ENCODE measurements at regions of chr2 and their contacts with region 1.

Region 1: DNA sequence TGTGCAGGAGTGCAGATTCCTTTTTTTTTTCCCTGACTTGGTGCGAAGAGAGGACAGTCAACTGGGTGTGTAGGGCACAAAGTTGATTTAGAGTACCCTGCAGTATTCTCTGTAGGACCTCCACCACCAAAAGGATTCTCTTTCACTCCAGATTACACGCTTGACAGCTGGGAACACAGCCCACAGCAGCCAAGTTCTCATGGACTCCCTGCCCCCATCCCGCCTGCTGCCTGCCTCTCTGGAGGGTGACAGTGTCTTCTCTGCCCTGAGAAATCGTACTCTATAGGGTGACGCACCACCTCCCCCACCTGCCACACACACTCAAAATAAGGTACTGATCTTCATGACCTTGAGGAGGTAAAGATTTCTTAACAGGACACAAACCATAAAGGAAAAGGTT is 26.6 kb upstream of the IHH start:
- DNase-seq: no peak

Region 2: DNA sequence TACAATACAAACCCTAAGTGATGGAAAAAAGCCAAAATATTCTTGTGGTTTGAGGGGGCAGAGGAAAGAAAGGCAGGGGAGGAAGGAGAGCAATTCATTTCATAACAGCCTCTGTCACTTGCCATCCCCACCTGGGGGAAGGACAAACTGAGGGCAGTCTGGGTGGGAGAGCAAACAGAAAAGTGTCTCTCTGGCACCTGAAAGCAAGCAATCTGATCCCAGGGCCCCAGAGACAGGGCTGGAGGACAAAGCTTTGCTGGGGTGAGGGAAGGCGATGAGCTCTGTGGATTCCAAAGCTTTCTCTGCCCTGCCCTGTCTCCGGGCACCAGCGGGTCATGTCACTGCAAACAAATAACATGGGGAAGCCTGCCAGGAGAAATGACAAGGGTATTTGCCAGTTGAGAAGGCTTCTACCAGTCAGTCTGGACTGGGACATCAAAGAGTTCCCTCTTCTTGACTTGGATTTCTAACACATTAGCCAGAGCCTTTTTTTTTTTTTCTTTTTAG is 1699.4 kb before region 1 on chr2:
- intact Hi-C with region 1: no loop called
- DNase-seq: no peak

Region 3: GRCh38 chr2:219142329-219142728 is 55.0 kb after region 1 on chr2:
- intact Hi-C with region 1: loop called in 1 of 2 experiments (anchors 1 kb)
- DNase-seq: no peak

Measured in posterior vena cava (tissue), 2 donors.